ENCODE measurements at regions of chr2 and their contacts with region 1.

Region 1: GRCh38 chr2:65064728-65065552 is 8.7 kb downstream of the CEP68 start:
- DNase-seq: peak; percentile 75
- CTCF ChIP-seq: peak; percentile 85

Region 2: GRCh38 chr2:65049010-65049669 is 15.8 kb before region 1 on chr2:
- CTCF ChIA-PET with region 1: interaction called, 36 read pairs
- POLR2A ChIA-PET with region 1: interaction called, 7 read pairs
- DNase-seq: no peak
- CTCF ChIP-seq: no peak

Region 3: GRCh38 chr2:65081232-65081685 is 16.3 kb after region 1 on chr2:
- CTCF ChIA-PET with region 1: interaction called, 30 read pairs
- POLR2A ChIA-PET with region 1: no interaction called
- DNase-seq: no peak
- CTCF ChIP-seq: no peak

Region 4: DNA sequence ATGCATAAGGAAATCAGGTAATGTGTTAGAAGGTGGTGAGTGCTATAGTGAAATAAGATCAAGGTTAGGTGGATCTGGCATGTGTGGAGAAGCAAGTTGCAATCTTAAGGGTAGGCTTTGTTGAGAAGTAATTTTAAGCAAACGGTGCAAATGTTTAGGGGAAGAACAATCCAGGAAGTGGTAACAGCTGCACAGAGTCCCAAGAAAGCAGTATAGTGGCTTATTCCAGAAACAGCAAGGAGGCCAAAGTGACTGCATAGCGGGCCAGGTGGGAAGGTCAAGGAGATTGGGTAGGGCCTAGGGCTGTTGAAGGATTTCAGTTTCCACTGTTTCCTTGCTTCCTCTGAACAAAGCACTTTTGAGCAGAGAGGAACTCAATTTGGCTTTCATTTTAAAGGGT is 95.0 kb after region 1 on chr2:
- CTCF ChIA-PET with region 1: interaction called, 12 read pairs
- POLR2A ChIA-PET with region 1: no interaction called
- DNase-seq: no peak
- CTCF ChIP-seq: no peak

Region 5: DNA sequence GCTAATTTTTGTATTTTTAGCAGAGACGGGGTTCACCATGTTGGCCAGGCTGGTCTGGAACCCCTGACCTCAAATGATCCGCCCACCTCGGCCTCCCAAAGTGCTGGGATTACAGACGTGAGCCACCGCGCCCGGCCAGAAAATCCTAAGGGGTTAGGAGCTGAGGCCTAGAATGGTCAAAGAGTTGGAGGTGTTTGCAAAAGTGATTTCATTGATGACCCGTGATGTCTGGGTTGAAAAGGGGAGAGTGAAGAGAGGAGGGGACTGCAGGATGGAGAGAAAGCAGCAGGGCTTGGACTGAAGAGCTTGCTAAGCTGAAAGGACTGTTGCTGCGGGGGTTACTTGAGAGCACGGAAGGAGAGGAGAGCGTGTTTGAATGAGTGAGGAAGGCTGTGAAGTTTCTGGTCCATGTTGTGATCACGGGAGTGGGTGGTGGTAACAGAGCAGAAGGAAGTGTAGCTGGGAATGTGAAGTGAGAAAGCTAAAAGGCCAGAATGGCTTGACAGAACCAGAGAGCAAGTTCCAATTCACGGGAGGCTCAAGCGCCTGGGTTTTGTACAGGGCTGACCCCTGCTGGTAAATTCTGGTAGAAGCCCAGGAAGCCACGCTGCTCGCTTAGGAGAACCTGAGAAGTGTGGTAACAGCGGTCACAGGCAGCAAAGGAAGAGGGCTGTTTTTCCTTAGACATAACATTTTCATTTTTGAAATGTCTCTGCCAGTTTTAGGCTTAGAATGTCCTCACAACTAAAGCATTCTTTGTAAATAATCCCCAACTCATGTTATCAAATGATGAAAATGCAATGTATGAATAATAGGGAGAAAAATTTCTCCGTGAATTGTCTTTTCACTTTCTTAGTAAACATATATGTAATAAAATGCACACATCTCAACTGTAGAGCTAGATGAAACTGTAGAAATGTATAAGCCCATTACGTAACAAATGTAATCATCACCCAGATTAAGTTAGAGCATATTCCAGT is 122.2 kb after region 1 on chr2:
- CTCF ChIA-PET with region 1: interaction called, 41 read pairs
- POLR2A ChIA-PET with region 1: interaction called, 3 read pairs
- DNase-seq: peak; percentile 86
- CTCF ChIP-seq: peak; percentile 80

Measured in GM10248 (cell line).